Prostate gland (tissue), 2 donors: ENCODE measurements at regions of chr5 and their contacts with region 1.

Region 1: GRCh38 chr5:140710899-140711552 is 10.8 kb downstream of the ZMAT2 start:
- DNase-seq: peak; percentile 93
- H3K4me3 ChIP-seq: peak overlapping the region; percentile 42 to 55
- H3K27ac ChIP-seq: peak overlapping the region; percentile 91 to 95
- H3K4me1 ChIP-seq: no peaks in the 10 kb centered on the region
- H3K27me3 ChIP-seq: no peaks in the 10 kb centered on the region
- CTCF ChIP-seq: no peak
- POLR2A ChIP-seq: peak; percentile 71

Region 2: DNA sequence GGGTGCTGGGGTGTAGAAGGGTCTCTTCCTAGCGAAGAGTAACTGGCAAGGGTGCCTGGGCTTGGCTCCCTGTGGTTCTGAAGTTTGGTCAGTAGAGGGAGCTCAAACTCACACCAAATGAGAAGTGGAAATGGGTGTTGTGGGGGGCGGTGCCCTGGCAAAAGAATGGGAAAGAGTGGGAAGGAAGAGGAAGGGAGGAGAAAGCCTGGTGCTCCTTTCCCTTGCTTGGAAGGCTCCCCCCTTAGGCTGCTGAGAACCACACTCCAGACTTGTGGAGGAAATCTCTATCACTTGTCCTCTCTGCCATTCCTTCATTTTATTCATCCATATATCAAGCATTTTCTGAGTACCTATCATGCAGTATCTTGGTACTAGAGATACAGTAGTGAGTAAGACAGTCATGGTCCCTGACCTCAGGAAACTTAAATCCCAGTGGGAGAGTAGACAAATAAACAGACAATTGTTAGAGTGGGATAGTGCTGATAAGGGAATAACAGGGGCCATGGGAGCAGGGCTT is 338.0 kb before region 1 on chr5:
- intact Hi-C with region 1: loop called (anchors 10 kb)
- DNase-seq: peak; percentile 37
- H3K4me3 ChIP-seq: no peak overlapping the region
- H3K27ac ChIP-seq: no peak overlapping the region
- H3K4me1 ChIP-seq: no peaks in the 10 kb centered on the region
- H3K27me3 ChIP-seq: no peaks in the 10 kb centered on the region
- CTCF ChIP-seq: peak; percentile 36 to 78 (median 60)
- POLR2A ChIP-seq: no peak

Region 3: DNA sequence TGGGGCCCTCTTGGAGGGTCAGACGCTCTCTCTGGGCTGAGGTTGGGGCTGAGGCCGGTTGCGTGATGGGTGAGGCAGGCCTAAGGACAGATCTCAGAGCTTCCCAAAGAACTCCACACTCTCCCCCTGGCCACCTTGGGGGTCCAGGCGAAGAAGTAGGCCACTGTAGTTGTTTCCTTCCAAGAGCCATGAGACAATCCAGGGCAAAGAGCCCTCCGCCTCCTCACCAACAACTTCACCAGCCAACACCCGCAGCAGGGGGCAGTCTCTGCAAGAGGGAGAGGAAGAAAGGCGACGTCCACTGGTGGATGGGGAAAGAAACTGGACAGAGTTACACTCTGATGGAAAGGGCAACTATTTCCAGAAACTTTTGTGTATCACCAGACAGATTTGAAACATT is 135.7 kb before region 1 on chr5:
- intact Hi-C with region 1: no loop called
- DNase-seq: peak; percentile 40
- H3K4me3 ChIP-seq: no peak overlapping the region
- H3K27ac ChIP-seq: no peak overlapping the region
- H3K4me1 ChIP-seq: no peaks in the 10 kb centered on the region
- H3K27me3 ChIP-seq: no peaks in the 10 kb centered on the region
- CTCF ChIP-seq: peak in 3 of 4 experiments; percentile 21 to 43 (median 38)
- POLR2A ChIP-seq: no peak

Region 4: DNA sequence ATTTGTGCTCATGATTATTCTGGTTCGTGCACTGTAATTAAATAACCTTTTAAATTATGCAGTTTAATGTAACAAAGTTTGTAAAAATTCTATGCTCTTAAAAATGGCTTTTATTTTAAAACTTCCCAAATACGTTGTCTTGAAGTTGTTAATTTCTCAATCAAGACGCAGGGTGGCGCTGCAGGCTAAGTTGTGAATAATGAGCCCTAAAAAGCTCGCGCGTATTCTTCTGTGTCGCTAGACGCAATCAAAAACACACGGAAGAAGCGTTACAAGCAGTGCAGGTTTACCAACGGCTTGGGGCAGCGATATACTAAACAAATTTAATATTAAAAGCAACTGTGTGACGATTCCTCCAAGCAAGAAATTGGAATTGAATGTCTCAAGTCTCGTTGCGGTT is 410.5 kb after region 1 on chr5 and contains the start of gene PCDHB4:
- intact Hi-C with region 1: no loop called
- DNase-seq: no peak
- H3K4me3 ChIP-seq: no peak within 1 kb of the TSS
- H3K27ac ChIP-seq: no peak within 1 kb of the TSS
- H3K4me1 ChIP-seq: no peaks in the 10 kb centered on the region
- H3K27me3 ChIP-seq: no peaks in the 10 kb centered on the region
- CTCF ChIP-seq: peak in 1 of 4 experiments; percentile 20
- POLR2A ChIP-seq: no peak
- total RNA-seq, gene PCDHB4: 1.4 to 1.7 TPM

Region 5: DNA sequence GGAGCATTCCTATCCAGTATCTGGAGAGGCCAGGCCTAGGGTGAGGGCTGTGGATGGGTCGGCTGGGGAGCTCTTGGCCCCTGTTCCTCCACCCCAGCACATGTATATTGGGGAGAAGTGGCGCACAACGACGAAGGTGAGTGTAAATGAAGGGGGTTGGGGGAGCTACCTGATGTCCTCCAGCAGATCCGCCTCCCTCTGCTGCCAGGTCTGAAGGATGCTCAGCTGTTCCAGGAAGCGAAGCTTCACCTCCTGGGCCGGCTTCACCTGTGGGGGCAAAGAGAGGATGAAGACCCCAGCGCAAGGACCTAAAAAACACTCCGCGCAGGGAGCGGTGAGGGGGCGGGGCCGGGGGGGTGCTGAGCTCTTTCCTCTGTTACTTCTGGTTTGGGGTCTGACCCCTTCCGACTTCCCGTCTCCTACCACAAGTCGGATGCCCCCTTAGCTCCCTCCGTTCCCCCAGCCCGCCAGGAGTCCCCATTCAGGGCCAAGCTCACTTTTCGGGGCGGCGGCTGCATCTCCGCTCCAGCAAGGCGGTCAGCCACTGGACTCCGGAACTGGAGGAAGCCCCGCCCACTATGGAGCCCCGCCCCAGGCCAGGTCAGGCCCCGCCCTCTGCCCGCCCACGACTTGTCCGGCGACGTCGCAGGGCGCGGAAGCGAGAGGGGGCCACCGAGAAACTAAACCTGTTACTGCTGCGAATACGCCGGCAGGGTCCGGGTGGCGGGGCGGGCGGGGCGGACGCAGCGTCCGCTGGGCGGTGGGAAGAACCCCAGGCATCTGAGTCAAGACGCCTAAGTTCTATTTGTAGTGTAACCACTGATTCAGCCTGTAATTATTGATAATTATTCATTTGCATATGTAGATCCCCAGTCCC is 940.1 kb after region 1 on chr5 and contains the start of gene FCHSD1:
- intact Hi-C with region 1: no loop called
- DNase-seq: peak; percentile 88
- H3K4me3 ChIP-seq: peak within 1 kb of the TSS; percentile 57 to 60
- H3K27ac ChIP-seq: peak within 1 kb of the TSS; percentile 58 to 65
- H3K4me1 ChIP-seq: peaks cover 5% of the 10 kb centered on the region
- H3K27me3 ChIP-seq: no peaks in the 10 kb centered on the region
- CTCF ChIP-seq: peak in 2 of 4 experiments; percentile 18 to 21
- POLR2A ChIP-seq: peak; percentile 54
- total RNA-seq, gene FCHSD1: 24.9 to 30.2 TPM